Breast epithelium (tissue), 4 donors: ENCODE measurements at regions of chr2 and their contacts with region 1.

Region 1: GRCh38 chr2:85327822-85328617 is at the start of gene TGOLN2:
- DNase-seq: peak; percentile 89 to 94
- H3K4me3 ChIP-seq: peak within 1 kb of the TSS; percentile 68 to 82 (median 81)
- H3K27ac ChIP-seq: peak within 1 kb of the TSS; percentile 95 to 97
- H3K4me1 ChIP-seq: peaks cover 5 to 19% of the 10 kb centered on the region in 2 donors
- H3K27me3 ChIP-seq: no peaks in the 10 kb centered on the region
- CTCF ChIP-seq: peak in 2 of 3 donors; percentile 10 to 40
- POLR2A ChIP-seq: peak; percentile 99
- total RNA-seq, gene TGOLN2: 111 to 161 (median 117) TPM

Region 2: GRCh38 chr2:84980263-84980983 is 347.6 kb before region 1 on chr2:
- intact Hi-C with region 1: no loop called
- DNase-seq: no peak
- H3K4me3 ChIP-seq: no peak overlapping the region
- H3K27ac ChIP-seq: peak overlapping the region; percentile 8 to 64
- H3K4me1 ChIP-seq: no peaks in the 10 kb centered on the region
- H3K27me3 ChIP-seq: no peaks in the 10 kb centered on the region
- CTCF ChIP-seq: no peak
- POLR2A ChIP-seq: no peak

Region 3: DNA sequence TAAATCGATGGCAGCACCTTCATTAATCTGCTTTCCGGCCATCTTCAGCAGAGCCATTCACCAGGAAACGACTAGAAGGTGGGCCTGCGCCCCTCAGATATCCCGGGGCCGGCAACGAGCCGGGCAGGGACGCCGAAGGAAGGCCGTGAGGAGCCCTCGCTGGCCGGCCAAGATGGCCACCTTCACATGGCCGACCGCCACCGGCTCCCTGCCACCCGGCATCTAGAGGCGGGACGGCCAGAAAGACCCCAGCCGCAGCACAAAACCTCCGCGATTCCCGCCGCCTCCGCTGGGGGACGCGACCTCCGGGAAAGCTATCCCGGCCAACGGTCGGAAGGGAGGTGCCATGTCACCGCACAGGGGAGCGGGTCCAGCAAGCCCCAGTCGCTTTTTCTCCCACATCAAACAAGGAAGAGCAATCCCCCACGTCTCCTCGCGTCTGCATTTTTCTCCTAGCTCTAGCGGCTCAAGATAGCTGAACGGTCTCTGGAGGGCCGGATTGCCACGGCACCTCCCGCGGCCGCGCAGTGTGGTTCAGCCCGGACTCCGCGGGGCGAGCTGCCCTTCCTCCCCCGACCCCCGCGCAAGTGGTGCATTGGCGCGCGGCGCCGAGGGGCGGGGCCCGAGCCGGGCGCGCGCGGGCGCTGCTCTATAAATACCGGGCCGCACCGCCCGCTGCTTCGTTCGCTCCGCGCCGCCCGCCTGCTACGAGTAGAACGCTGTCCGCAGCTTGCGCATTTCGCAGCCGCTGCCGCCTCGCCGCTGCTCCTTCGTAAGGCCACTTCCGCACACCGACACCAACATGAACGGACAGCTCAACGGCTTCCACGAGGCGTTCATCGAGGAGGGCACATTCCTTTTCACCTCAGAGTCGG is 210.7 kb after region 1 on chr2 and contains the start of gene MAT2A:
- intact Hi-C with region 1: loop called (anchors 10 kb)
- DNase-seq: peak; percentile 90 to 93
- H3K4me3 ChIP-seq: peak within 1 kb of the TSS; percentile 92 to 97 (median 95)
- H3K27ac ChIP-seq: peak within 1 kb of the TSS; percentile 92 to 99
- H3K4me1 ChIP-seq: peaks cover 0 to 16% of the 10 kb centered on the region in 2 donors
- H3K27me3 ChIP-seq: no peaks in the 10 kb centered on the region
- CTCF ChIP-seq: peak; percentile 87 to 88 (median 88)
- POLR2A ChIP-seq: peak; percentile 98
- total RNA-seq, gene MAT2A: 180 to 263 (median 236) TPM